Transverse colon (tissue), 4 donors: ENCODE measurements at regions of chr1 and their contacts with region 1.

Region 1: DNA sequence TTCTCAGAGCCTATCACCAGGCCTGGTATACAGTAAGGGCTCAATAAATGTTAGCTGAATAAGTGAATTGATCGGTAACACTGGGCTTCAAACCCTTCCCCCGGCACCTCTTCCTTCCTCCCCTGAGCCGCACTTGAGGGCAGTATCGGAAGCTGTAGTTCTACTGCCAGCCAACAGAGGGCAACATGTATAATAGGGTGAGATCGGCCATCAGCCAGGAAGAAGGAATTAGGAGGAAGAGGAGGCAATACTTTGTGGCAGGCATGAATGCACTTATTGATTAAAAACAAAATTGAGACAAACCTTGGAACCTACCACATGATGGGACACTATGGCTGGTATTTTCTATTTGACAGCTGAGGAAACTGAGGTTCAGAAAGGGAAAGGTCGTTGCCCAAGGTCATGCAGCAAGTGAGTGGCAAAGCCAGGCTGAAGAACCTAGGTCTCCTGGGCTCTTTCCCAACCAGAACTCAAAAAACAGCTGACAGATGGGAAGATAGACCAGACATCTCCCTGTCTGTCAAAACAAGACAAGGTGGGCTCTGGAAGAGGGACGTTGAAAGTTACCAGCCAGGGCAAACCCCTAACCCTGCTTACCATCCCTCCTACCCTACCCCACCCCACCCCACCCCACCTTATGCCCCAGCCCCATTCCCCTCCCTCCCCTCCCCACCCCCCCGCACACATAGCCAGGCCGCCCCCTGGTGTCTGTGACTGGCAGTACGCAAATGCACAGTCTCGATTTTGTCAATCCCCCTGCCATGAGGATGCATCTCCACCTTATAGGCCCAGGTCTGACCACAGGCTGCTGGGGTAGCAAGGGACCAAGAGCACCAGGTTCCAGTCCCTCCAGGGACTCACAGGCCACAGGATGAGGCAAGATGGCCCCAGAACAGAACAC is 107.3 kb upstream of the RUNX3 start:
- DNase-seq: peak; percentile 47
- H3K4me3 ChIP-seq: no peak overlapping the region
- H3K27ac ChIP-seq: no peak overlapping the region
- H3K4me1 ChIP-seq: peaks cover 0 to 11% (median 0%) of the 10 kb centered on the region in 4 donors
- H3K27me3 ChIP-seq: no peaks in the 10 kb centered on the region
- CTCF ChIP-seq: peak; percentile 50 to 68 (median 55)
- EP300 ChIP-seq: no peak
- POLR2A ChIP-seq: no peak

Region 2: GRCh38 chr1:24558902-24559791 is 478.3 kb before region 1 on chr1:
- in situ Hi-C with region 1: no loop called
- intact Hi-C with region 1: no loop called
- DNase-seq: peak; percentile 47
- H3K4me3 ChIP-seq: no peak overlapping the region
- H3K27ac ChIP-seq: no peak overlapping the region
- H3K4me1 ChIP-seq: peaks cover 0 to 13% (median 6%) of the 10 kb centered on the region in 4 donors
- H3K27me3 ChIP-seq: peaks cover 33% of the 10 kb centered on the region
- CTCF ChIP-seq: no peak
- EP300 ChIP-seq: no peak
- POLR2A ChIP-seq: no peak

Region 3: GRCh38 chr1:24847995-24848881 is 189.2 kb before region 1 on chr1:
- in situ Hi-C with region 1: loop called in 3 of 4 experiments (anchors 10 kb)
- intact Hi-C with region 1: no loop called
- DNase-seq: peak; percentile 95
- H3K4me3 ChIP-seq: peak overlapping the region; percentile 31 to 58 (median 46)
- H3K27ac ChIP-seq: peak overlapping the region; percentile 68 to 84 (median 72)
- H3K4me1 ChIP-seq: peaks cover 0 to 18% (median 9%) of the 10 kb centered on the region in 4 donors
- H3K27me3 ChIP-seq: no peaks in the 10 kb centered on the region
- CTCF ChIP-seq: peak; percentile 93 to 98 (median 96)
- EP300 ChIP-seq: no peak
- POLR2A ChIP-seq: peak; percentile 47

Region 4: GRCh38 chr1:24930204-24931145 is 106.9 kb before region 1 on chr1 and contains the start of gene RUNX3:
- in situ Hi-C with region 1: loop called in 3 of 4 experiments (anchors 10 to 25 kb)
- intact Hi-C with region 1: no loop called
- DNase-seq: peak; percentile 83
- H3K4me3 ChIP-seq: peak within 1 kb of the TSS in 3 of 4 donors; percentile 20 to 45 (median 36)
- H3K27ac ChIP-seq: peak within 1 kb of the TSS; percentile 68 to 81 (median 78)
- H3K4me1 ChIP-seq: peaks cover 3 to 57% (median 31%) of the 10 kb centered on the region in 4 donors
- H3K27me3 ChIP-seq: peaks cover 98% of the 10 kb centered on the region
- CTCF ChIP-seq: no peak
- EP300 ChIP-seq: no peak
- POLR2A ChIP-seq: peak; percentile 18
- total RNA-seq, gene RUNX3: 1.5 to 4.8 (median 3.4) TPM